Naive thymus-derived CD4-positive, alpha-beta T cell (primary cell): ENCODE measurements at regions of chr13 and their contacts with region 1.

Region 1: DNA sequence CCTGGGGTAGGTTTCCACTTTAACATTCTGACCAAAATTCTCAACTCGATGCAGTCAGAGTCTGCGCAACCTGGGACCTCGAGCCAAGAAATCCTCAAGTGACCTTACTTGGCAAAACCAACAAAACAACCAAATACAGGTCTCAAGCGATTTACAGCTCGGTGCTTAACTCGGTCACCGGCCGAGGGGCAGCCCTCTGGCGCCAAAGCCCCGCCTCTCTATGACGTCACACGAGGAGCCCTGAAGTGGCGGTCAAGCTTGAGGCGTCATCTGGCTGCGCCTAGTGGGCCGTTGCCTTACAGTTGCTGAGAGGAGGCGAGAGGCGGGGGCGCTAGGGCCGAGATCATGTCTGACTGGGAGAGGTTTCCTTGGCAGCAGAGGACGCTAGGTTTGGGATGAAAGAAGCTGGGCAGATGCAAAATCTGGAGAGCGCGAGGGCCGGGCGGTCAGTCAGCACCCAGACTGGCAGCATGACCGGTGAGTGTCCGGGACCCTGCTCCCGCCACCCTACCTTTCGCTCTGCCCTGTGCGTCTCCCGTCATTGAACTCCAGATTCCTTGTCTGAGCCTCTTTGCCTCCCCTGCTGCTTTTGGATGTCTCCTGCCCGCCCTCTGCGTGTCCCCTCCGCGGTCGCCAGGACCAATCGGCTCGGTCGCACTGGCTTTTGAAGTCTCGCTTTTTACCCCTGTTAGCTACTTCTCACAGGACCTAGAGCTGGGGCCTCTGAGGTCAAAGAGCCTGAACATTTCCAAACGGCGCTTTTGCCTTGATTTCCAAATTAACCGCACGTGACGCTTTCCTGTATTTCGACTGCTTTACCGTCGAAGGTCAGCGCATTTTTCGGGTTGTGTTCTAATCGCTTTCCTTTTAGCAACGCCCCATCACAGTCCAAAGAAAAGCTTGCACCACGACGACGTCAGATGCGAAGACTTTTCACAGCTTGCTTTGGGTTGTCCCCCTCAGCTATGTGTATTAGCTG is at the start of gene CDADC1:
- DNase-seq: peak; percentile 44 to 93 (median 54)
- ATAC-seq: peak; percentile 90
- H3K4me3 ChIP-seq: peak within 1 kb of the TSS; percentile 93
- H3K4me3 Mint-ChIP-seq: peak within 1 kb of the TSS; percentile 94 to 99 (median 98)
- H3K27ac ChIP-seq: peak within 1 kb of the TSS; percentile 75
- H3K27ac Mint-ChIP-seq: peak within 1 kb of the TSS; percentile 92 to 97 (median 95)
- H3K4me1 ChIP-seq: peaks cover 1 to 3% of the 10 kb centered on the region in 2 donors
- H3K4me1 Mint-ChIP-seq: peaks cover 16 to 59% (median 53%) of the 10 kb centered on the region in 7 donors
- H3K27me3 ChIP-seq: no peaks in the 10 kb centered on the region
- H3K27me3 Mint-ChIP-seq: peaks cover 0 to 25% (median 0%) of the 10 kb centered on the region in 5 donors
- total RNA-seq, gene CDADC1: 10.7 to 21.3 (median 14.5) TPM

Region 2: DNA sequence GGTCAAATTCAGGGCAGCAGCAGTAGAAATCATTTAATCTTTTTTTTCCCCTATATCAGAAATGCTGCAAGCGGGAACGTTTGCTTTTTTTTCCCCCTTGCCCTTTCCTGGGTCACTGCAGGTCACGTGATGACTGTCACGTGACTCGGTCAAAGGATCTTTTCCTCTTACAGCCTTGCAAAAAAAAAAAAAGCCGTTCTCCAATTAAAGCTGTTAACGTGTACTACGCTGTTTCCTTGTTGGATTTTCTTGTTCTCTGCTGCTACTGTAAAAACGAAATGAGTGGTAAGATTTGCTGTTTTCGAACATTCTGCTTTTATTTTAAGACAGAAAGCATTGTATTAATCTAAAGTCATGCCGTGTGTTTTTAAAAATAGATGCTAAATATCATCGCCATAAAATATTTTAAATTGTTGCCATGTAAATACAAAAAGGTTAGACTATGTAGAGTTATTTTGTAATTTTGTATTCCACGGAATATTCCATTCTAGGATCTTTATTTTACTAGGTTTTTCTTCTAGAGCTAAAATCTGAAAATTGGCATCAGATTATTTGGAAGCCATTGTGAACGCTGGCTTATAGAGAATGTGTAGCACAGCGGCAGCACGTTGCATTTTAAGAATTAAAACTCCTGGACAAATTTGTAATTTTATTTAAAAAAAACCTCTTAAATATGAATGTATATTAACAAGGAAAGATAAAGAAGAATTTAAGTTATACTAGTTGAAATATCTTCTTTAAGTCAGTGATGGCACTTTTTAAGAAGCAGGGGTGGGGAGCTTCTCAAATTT is 137.6 kb before region 1 on chr13:
- CTCF ChIA-PET with region 1: no interaction called
- POLR2A ChIA-PET with region 1: no interaction called
- intact Hi-C with region 1: loop called in 1 of 2 experiments (anchors 5 kb)
- DNase-seq: peak; percentile 36 to 76 (median 68)
- ATAC-seq: peak; percentile 82
- H3K4me3 ChIP-seq: peak overlapping the region; percentile 75
- H3K4me3 Mint-ChIP-seq: peak overlapping the region; percentile 79 to 94 (median 90)
- H3K27ac ChIP-seq: peak overlapping the region; percentile 80
- H3K27ac Mint-ChIP-seq: peak overlapping the region; percentile 79 to 91 (median 90)
- H3K4me1 ChIP-seq: peaks cover 11 to 25% of the 10 kb centered on the region in 2 donors
- H3K4me1 Mint-ChIP-seq: peaks cover 16 to 48% (median 30%) of the 10 kb centered on the region in 7 donors
- H3K27me3 ChIP-seq: no peaks in the 10 kb centered on the region
- H3K27me3 Mint-ChIP-seq: no peaks in the 10 kb centered on the region

Region 3: DNA sequence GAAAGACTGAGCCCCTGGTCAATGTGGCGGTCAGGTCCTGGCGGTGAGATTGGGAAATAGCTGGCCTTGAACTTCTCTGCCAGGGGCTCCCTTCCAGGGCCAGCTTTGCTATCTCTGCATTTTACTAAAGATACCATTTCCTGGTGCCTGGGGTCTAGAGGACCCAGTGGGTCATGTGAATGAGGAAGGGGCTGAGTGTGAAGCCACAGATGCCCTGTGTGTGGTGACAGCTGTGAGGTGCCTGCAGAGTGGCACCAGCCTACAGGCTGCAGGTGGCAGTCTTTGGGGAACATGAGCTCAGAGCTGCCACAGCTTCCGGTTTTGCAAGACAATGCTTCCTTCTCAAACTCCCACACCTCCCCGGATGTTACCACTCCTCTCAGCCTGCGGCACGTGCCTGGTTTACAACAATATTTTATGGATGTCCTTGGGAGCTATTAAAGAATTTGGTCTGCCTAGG is 33.0 kb before region 1 on chr13:
- CTCF ChIA-PET with region 1: interaction called, 3 read pairs
- POLR2A ChIA-PET with region 1: no interaction called
- intact Hi-C with region 1: loop called in 1 of 2 experiments (anchors 2 kb)
- DNase-seq: peak in 7 of 9 donors; percentile 28 to 54 (median 49)
- ATAC-seq: peak; percentile 88
- H3K4me3 ChIP-seq: no peak overlapping the region
- H3K4me3 Mint-ChIP-seq: peak overlapping the region in 7 of 10 donors; percentile 5 to 62 (median 34)
- H3K27ac ChIP-seq: no peak overlapping the region
- H3K27ac Mint-ChIP-seq: peak overlapping the region in 6 of 9 donors; percentile 22 to 71 (median 57)
- H3K4me1 ChIP-seq: peaks cover 6 to 8% of the 10 kb centered on the region in 2 donors
- H3K4me1 Mint-ChIP-seq: peaks cover 16 to 27% (median 19%) of the 10 kb centered on the region in 7 donors
- H3K27me3 ChIP-seq: peaks cover 3 to 6% of the 10 kb centered on the region in 2 donors
- H3K27me3 Mint-ChIP-seq: peaks cover 30 to 35% (median 31%) of the 10 kb centered on the region in 5 donors

Region 4: DNA sequence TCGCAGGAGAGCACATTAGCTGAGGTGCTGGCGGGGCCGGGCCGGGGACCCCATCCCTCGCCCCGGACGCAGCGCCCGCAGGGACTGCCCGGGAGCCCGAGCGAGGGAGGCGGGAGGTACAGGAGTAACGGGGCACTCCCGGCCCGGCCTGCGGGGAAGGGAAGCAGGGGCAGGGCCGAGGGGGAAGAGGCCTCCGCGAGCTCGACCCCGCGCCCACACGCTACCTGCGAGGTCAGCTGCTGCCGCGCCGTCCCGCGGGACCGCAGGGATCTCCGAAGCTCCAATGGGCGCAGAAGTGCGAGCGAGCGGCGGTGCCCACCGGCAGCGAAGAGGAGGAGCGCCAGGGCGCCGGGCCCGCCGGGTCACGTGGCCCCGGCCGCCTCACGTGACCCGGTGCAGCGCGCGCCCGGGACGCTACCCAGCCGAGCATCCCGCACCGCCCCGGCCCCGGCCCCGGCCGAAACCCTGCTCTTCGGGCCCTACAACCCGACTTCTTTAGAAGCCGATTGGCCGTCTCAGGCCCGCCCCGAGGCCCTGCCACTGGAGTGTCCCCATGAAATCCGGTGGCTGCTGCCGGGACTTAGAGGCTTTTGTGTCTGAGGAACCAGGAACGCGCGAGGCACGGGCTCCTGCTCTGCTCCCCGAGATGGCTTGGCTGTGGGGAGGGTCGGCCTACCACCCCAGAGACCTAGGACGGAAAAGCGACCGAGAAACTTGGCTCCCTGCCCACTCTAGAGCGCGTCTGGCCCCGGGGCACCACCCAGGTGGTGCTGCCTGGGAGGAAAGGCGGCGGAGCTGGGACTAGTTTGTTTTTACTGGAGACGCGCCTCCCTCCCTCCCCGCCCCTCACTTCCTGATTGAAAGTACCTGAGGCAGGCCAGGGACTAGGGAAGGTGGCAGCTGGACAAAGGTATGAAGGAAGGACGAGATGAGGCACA is 337.6 kb after region 1 on chr13 and contains the start of gene RCBTB1:
- CTCF ChIA-PET with region 1: no interaction called
- POLR2A ChIA-PET with region 1: no interaction called
- intact Hi-C with region 1: loop called in 1 of 2 experiments (anchors 1 kb)
- DNase-seq: peak; percentile 47 to 74 (median 66)
- ATAC-seq: peak; percentile 97
- H3K4me3 ChIP-seq: peak within 1 kb of the TSS; percentile 56
- H3K4me3 Mint-ChIP-seq: peak within 1 kb of the TSS; percentile 83 to 100 (median 92)
- H3K27ac ChIP-seq: peak within 1 kb of the TSS; percentile 82
- H3K27ac Mint-ChIP-seq: peak within 1 kb of the TSS; percentile 86 to 96 (median 94)
- H3K4me1 ChIP-seq: peaks cover 10 to 16% of the 10 kb centered on the region in 2 donors
- H3K4me1 Mint-ChIP-seq: peaks cover 32 to 53% (median 50%) of the 10 kb centered on the region in 7 donors
- H3K27me3 ChIP-seq: no peaks in the 10 kb centered on the region
- H3K27me3 Mint-ChIP-seq: peaks cover 0 to 3% (median 0%) of the 10 kb centered on the region in 5 donors
- total RNA-seq, gene RCBTB1: 16.3 to 22.2 (median 20.4) TPM